Left colon (tissue), 2 donors: ENCODE measurements at regions of chr1 and their contacts with region 1.

Region 1: DNA sequence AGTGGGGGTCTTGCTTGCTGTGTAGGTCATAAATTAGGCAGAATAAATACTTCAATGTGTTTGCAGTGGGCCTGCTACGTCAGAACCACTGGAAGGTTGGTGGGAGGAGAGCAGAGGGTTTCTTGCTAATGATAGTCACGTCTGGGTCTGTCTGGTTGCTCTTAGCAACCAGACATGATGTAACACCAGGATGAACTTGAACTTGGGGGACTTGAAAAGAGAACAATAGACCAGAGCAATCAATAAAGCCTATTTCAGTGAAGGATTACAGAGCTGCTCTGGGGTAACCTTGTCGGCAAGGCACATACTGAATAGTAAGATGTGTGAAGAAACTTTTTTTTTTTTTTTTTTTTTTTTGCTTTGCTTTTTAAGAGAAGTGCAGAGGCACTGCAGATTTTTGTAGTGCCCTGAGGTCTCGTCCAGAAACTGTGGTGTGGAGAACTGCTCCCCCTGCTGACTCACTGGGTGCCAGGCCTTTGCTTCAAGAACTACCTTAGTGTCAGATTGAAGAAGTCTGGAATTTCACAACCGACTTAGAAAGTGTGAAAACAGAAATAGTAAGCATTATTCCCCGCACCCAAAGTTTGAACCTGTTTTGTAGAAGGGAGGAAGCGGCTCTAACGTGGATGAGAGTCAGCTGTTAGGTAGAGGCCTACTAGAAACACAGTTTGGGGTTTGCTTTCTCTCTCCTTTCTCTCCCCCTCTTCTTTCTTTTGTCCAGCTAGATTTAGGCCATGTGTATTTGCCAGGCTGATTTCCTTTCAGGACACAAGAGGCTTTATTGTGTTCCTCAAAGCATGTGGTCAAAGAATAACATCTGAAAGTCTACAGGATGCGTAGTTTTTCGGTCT is 271.6 kb downstream of the TM2D1 start:
- DNase-seq: peak; percentile 83 to 86
- ATAC-seq: peak; percentile 54

Region 2: DNA sequence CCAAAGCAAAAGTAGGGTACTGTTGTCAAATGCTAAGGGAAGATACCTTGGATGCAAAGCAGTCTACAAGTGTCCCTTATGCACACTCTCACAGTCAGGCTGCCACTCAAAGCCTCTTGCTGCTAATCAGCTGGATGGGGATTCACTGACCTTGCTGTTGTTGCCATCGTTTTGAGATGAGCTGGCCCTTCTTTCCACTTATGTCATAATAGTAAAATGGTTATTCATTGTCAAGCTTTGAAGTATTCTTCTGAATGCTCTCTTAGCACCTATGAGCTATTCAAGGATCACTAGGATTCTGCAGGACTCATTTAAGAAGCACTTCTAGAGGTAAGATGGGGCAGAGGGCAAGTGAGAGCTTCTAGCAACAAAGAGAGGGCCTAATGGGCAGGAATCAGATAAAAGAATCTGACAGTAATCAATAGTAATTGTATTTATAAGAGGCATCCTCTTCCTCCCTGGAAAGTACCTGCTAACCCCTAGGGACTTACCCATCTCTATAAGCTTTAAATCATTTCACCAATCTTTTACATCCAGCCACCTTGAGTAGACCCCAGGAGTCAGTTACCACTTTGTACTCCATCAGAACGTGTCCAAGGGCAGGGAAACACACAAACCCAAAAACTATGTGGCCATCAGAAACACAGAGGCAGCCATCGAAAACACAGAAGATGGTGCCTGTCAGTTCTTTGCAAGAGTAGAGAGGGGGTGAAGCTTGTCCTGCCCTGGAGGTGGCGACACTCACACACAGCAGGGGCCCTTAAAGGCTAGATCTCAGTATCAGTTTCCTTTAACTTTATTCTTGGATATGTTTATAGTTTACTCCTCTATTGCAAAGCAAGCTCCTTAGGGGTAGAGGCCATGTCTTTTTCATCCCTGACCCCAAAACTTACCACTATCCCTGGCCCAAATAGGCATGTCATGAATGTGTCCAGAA is 474.6 kb before region 1 on chr1:
- intact Hi-C with region 1: loop called in 1 of 2 experiments (anchors 10 kb)
- DNase-seq: peak in 1 of 2 donors; percentile 31
- ATAC-seq: peak; percentile 85